ENCODE measurements at regions of chr1 and their contacts with region 1.

Region 1: GRCh38 chr1:66725885-66726665 is 26.2 kb upstream of the DYNLT5 start:
- DNase-seq: peak; percentile 56
- H3K4me3 ChIP-seq: no peak overlapping the region
- H3K27ac ChIP-seq: no peak overlapping the region
- H3K4me1 ChIP-seq: no peaks in the 10 kb centered on the region
- H3K27me3 ChIP-seq: no peaks in the 10 kb centered on the region
- CTCF ChIP-seq: peak; percentile 97 to 98

Region 2: GRCh38 chr1:66253330-66253921 is 472.6 kb before region 1 on chr1:
- CTCF ChIA-PET with region 1: no interaction called
- dilution Hi-C with region 1: no loop called
- in situ Hi-C with region 1: no loop called
- intact Hi-C with region 1: loop called (anchors 1 kb)
- DNase-seq: peak; percentile 76
- H3K4me3 ChIP-seq: no peak overlapping the region
- H3K27ac ChIP-seq: no peak overlapping the region
- H3K4me1 ChIP-seq: no peaks in the 10 kb centered on the region
- H3K27me3 ChIP-seq: no peaks in the 10 kb centered on the region
- CTCF ChIP-seq: peak; percentile 84 to 91

Region 3: GRCh38 chr1:66452162-66452561 is 273.9 kb before region 1 on chr1:
- CTCF ChIA-PET with region 1: no interaction called
- dilution Hi-C with region 1: no loop called
- in situ Hi-C with region 1: no loop called
- intact Hi-C with region 1: loop called (anchors 1 kb)
- DNase-seq: no peak
- H3K4me3 ChIP-seq: no peak overlapping the region
- H3K27ac ChIP-seq: no peak overlapping the region
- H3K4me1 ChIP-seq: no peaks in the 10 kb centered on the region
- H3K27me3 ChIP-seq: peaks cover 2% of the 10 kb centered on the region
- CTCF ChIP-seq: peak in 1 of 2 donors; percentile 23

Measured in mammary epithelial cell (primary cell).